B cell (primary cell): ENCODE measurements at regions of chr2 and their contacts with region 1.

Region 1: GRCh38 chr2:264660-265468 is at the start of gene ACP1:
- DNase-seq: peak; percentile 98
- ATAC-seq: peak; percentile 85
- H3K4me3 ChIP-seq: peak within 1 kb of the TSS; percentile 66 to 93 (median 85)
- H3K4me3 Mint-ChIP-seq: peak within 1 kb of the TSS; percentile 97
- H3K27ac ChIP-seq: peak within 1 kb of the TSS; percentile 80 to 91
- H3K27ac Mint-ChIP-seq: peak within 1 kb of the TSS; percentile 98
- H3K4me1 ChIP-seq: peaks cover 22 to 25% of the 10 kb centered on the region in 2 donors
- H3K4me1 Mint-ChIP-seq: peaks cover 49% of the 10 kb centered on the region
- H3K27me3 ChIP-seq: no peaks in the 10 kb centered on the region
- H3K27me3 Mint-ChIP-seq: no peaks in the 10 kb centered on the region
- CTCF ChIP-seq: no peak
- total RNA-seq, gene ACP1: 85.8 and 87.8 TPM in 2 replicates

Region 2: DNA sequence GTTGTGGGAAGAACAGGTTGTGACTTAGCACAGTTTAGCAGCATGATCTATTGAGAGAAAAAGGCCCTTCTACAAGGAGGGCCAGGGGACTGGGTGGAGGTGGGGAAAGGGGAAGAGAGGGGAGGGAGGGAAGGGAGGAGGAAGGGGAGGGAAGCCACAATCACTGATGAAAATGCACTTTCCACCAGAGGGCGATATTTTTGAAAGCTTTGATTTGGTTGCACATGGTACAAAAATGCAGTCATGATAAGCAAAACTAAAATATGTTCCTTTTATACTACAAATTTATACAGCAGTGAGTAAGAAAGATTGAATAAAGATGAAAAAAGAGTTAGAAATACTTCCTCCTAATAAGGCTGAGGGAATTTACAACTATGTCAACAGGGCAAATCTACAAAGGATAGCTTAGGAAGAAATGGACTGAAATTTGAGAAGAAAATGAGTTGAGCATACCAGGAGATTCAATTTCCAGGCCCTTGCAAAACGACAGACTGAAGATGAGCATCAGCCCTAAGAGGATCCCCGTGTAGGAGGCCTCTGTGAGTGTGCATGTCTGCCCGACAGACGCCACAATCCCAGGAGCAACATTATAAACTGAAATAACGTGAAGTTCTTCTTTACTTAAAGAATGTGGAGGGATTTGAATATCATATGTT is 18.2 kb before region 1 on chr2:
- CTCF ChIA-PET with region 1: interaction called, 9 read pairs
- POLR2A ChIA-PET with region 1: no interaction called
- intact Hi-C with region 1: loop called (anchors 1 kb)
- DNase-seq: peak; percentile 71
- ATAC-seq: peak; percentile 51
- H3K4me3 ChIP-seq: no peak overlapping the region
- H3K4me3 Mint-ChIP-seq: no peak overlapping the region
- H3K27ac ChIP-seq: no peak overlapping the region
- H3K27ac Mint-ChIP-seq: no peak overlapping the region
- H3K4me1 ChIP-seq: peaks cover 0 to 3% of the 10 kb centered on the region in 2 donors
- H3K4me1 Mint-ChIP-seq: peaks cover 4% of the 10 kb centered on the region
- H3K27me3 ChIP-seq: no peaks in the 10 kb centered on the region
- H3K27me3 Mint-ChIP-seq: no peaks in the 10 kb centered on the region
- CTCF ChIP-seq: peak; percentile 78

Region 3: DNA sequence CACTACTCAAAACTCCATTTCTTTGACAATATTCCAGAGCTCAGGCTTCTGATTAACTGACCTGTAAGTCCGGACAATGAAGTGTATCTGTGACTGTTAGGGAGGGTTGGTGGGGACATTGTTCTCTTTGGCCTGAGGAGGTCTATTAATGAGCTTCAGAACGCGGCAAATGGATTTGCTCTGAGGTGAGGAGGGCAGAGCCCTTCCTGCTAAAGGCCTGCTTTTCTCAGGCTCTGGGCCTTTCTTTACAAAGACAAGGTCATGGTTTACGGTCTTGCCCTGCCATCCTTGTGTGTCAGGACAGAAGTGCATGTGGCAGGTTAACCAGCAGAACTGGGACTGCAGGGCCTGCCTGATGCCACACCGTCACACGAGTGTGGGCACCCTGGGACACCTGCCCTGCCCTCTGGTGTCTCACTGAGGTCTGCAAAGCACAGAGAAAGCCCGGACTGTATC is 15.8 kb after region 1 on chr2:
- CTCF ChIA-PET with region 1: no interaction called
- POLR2A ChIA-PET with region 1: no interaction called
- intact Hi-C with region 1: no loop called
- DNase-seq: no peak
- ATAC-seq: no peak
- H3K4me3 ChIP-seq: no peak overlapping the region
- H3K4me3 Mint-ChIP-seq: no peak overlapping the region
- H3K27ac ChIP-seq: no peak overlapping the region
- H3K27ac Mint-ChIP-seq: no peak overlapping the region
- H3K4me1 ChIP-seq: peaks cover 4% of the 10 kb centered on the region in 2 donors
- H3K4me1 Mint-ChIP-seq: peaks cover 5% of the 10 kb centered on the region
- H3K27me3 ChIP-seq: no peaks in the 10 kb centered on the region
- H3K27me3 Mint-ChIP-seq: peaks cover 3% of the 10 kb centered on the region
- CTCF ChIP-seq: no peak

Region 4: DNA sequence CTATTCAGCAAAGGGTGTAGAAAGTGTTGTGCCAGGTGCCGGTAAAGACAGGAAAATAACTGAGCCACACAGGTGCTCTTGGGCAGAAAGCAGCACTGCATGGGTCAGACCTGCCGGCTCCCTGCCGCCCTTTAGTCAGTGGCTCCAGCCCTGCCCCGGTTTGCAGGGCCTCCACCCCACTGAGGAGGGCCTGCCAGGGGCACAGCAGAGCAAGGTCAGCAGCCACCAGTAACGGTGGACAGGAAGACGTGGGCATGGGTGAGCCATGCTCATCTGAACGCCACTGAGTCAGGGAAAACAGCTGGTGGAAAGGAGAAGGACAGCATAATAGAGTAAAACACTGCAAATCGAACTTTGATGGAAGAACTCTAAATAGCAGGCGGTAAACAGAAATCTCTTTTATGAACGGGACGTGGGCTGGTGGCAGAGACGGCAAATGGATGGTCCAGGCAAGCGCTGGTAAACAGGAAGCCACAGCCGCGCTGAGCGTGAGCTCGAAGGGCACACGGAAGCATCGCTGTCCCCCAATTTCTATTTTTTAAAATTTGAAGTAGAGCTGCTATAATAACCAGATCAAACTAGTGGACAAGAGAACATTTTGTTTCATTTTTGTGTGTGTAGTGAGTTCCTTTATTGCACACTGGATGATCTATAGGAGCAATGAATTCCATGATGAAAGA is 164.9 kb after region 1 on chr2:
- CTCF ChIA-PET with region 1: no interaction called
- POLR2A ChIA-PET with region 1: interaction called, 3 read pairs
- intact Hi-C with region 1: loop called (anchors 1 kb)
- DNase-seq: peak; percentile 44
- ATAC-seq: peak; percentile 77
- H3K4me3 ChIP-seq: peak overlapping the region; percentile 23 to 67 (median 45)
- H3K4me3 Mint-ChIP-seq: peak overlapping the region; percentile 79
- H3K27ac ChIP-seq: peak overlapping the region; percentile 67 to 82
- H3K27ac Mint-ChIP-seq: peak overlapping the region; percentile 98
- H3K4me1 ChIP-seq: peaks cover 23 to 24% of the 10 kb centered on the region in 2 donors
- H3K4me1 Mint-ChIP-seq: peaks cover 28% of the 10 kb centered on the region
- H3K27me3 ChIP-seq: no peaks in the 10 kb centered on the region
- H3K27me3 Mint-ChIP-seq: no peaks in the 10 kb centered on the region
- CTCF ChIP-seq: no peak

Region 5: DNA sequence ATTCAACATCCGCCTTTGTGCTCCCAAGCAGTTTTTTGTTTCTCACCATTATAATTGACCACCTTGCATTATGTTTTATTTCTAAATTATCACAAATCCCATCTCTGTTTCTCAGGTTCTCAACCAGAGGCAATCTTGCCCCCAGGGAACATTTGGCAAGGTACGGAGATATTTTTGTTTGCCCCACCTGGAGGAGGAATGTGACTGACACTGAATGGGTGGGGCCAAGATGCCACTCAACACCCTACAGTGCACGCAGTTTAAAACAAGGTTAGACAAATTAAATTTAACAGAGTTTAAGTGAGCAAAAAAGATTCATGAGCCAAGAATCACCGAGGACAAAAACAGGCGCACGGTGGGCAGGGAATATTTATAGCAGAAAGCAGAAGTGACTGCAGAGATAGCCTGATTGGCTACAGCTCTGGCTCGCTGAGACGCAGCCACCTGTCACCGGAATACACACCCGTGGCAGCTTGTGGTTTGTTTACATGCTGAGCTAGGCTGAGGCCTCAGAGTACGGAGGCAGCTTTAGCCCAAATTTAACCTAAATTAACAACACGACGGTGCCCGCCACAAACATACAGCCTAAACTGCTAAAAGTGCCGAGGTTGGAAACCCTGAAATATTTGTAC is 173.0 kb after region 1 on chr2:
- CTCF ChIA-PET with region 1: no interaction called
- POLR2A ChIA-PET with region 1: no interaction called
- intact Hi-C with region 1: loop called (anchors 1 kb)
- DNase-seq: peak; percentile 90
- ATAC-seq: peak; percentile 98
- H3K4me3 ChIP-seq: peak overlapping the region; percentile 15 to 56 (median 25)
- H3K4me3 Mint-ChIP-seq: peak overlapping the region; percentile 79
- H3K27ac ChIP-seq: peak overlapping the region; percentile 87 to 90
- H3K27ac Mint-ChIP-seq: peak overlapping the region; percentile 88
- H3K4me1 ChIP-seq: peaks cover 44 to 58% of the 10 kb centered on the region in 2 donors
- H3K4me1 Mint-ChIP-seq: peaks cover 50% of the 10 kb centered on the region
- H3K27me3 ChIP-seq: no peaks in the 10 kb centered on the region
- H3K27me3 Mint-ChIP-seq: no peaks in the 10 kb centered on the region
- CTCF ChIP-seq: no peak

Region 6: GRCh38 chr2:460861-461260 is 196.0 kb after region 1 on chr2:
- CTCF ChIA-PET with region 1: interaction called, 3 read pairs
- POLR2A ChIA-PET with region 1: no interaction called
- intact Hi-C with region 1: loop called (anchors 10 kb)
- DNase-seq: peak; percentile 86
- ATAC-seq: peak; percentile 81
- H3K4me3 ChIP-seq: peak overlapping the region in 3 of 5 experiments; percentile 3 to 34 (median 5)
- H3K4me3 Mint-ChIP-seq: peak overlapping the region; percentile 88
- H3K27ac ChIP-seq: peak overlapping the region; percentile 86 to 89
- H3K27ac Mint-ChIP-seq: peak overlapping the region; percentile 98
- H3K4me1 ChIP-seq: peaks cover 65 to 70% of the 10 kb centered on the region in 2 donors
- H3K4me1 Mint-ChIP-seq: peaks cover 79% of the 10 kb centered on the region
- H3K27me3 ChIP-seq: no peaks in the 10 kb centered on the region
- H3K27me3 Mint-ChIP-seq: no peaks in the 10 kb centered on the region
- CTCF ChIP-seq: no peak

Region 7: DNA sequence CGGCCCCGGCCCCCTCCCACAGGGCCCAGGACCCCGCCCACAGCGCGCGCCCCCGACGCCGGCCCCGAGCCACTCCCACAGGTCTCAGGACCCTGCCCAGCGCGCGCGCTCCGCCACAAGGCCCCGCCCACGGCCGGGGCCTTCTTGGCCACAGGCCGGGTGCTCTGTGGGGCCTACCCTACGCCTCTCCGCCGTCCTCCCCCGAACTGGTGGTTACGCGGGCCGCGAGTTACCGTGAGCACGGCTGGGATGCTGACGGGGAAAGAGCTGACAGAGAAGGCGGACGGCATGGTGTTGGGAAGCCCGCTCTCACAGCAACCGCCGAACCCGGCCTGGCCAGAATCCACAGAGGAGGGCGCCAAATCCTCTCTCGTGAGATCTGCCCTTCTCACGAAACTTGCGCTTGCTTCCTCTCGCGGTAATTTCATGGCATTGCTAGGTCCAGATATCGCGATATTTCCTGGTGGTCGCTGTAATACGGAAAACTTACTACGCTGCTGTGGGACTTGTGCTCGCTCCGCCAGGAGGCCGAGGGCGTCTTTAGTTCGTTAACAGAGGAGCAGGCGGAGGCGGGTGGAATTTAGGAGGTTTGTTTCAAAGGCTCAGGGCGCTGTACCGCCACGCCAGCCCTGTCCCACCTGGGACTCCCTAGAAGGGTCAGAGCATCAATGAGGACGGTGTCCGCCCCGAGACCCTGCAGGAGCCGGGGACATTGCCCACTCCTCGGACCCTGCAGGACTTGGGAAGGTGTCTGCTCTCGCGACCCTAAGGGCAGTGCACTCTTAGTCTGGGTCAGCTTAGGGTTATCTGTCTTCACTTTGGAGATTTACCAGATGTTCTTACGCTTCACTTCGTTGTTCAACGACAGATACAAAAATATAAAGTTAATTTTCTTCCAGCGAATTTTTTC is 412.4 kb after region 1 on chr2 and contains the start of gene TMEM18:
- CTCF ChIA-PET with region 1: no interaction called
- POLR2A ChIA-PET with region 1: no interaction called
- intact Hi-C with region 1: loop called (anchors 1 kb)
- DNase-seq: peak; percentile 99
- ATAC-seq: peak; percentile 71
- H3K4me3 ChIP-seq: peak within 1 kb of the TSS; percentile 83 to 98 (median 91)
- H3K4me3 Mint-ChIP-seq: peak within 1 kb of the TSS; percentile 97
- H3K27ac ChIP-seq: peak within 1 kb of the TSS; percentile 97 to 100
- H3K27ac Mint-ChIP-seq: peak within 1 kb of the TSS; percentile 98
- H3K4me1 ChIP-seq: peaks cover 9 to 28% of the 10 kb centered on the region in 2 donors
- H3K4me1 Mint-ChIP-seq: peaks cover 54% of the 10 kb centered on the region
- H3K27me3 ChIP-seq: no peaks in the 10 kb centered on the region
- H3K27me3 Mint-ChIP-seq: no peaks in the 10 kb centered on the region
- CTCF ChIP-seq: peak; percentile 52
- total RNA-seq, gene TMEM18: 37.8 and 38.5 TPM in 2 replicates